BJ (cell line): ENCODE measurements at regions of chr4 and their contacts with region 1.

Region 1: GRCh38 chr4:40940317-40940741 is 190.6 kb downstream of the NSUN7 start:
- DNase-seq: no peak
- H3K4me3 ChIP-seq: no peak overlapping the region
- H3K27me3 ChIP-seq: no peaks in the 10 kb centered on the region
- CTCF ChIP-seq: no peak

Region 2: DNA sequence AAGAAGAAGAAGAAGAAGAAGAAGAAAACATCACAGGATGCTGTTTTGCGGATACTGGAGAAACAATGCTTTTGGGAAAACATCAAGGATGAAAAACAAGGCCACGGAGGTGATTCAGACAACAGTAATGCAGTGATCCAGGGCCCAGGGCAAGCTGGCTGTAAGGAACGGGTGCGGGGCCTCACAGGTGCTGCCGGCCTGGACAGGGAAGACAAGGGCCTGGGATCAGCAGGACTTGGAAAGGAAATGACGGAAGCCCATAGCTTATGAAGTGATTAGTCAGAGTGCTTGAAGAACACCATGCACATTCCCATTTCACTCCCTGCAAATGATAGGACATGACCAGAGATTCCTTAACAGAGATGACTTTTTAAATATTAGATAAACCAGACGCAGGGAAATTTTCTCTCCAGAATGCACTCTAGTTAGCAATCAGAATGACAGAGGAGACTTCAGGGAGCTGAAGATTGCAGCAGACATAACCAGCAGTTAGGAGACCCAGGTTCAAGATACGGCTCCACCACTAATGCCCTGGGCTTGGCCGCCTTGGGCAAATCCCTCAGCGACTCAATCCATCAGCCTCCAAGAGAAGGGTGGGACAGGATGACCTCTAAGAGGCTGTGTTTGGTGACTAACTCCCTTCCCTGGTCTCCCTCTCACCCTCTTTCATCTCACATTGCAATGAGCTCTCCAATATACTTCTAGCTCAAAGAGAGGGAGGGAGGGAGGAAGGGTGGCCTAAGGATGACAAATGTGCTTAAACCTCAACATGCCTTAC is 219.9 kb after region 1 on chr4:
- CTCF ChIA-PET with region 1: no interaction called
- POLR2A ChIA-PET with region 1: interaction called, 12 read pairs
- DNase-seq: peak; percentile 52
- H3K4me3 ChIP-seq: no peak overlapping the region
- H3K27me3 ChIP-seq: no peaks in the 10 kb centered on the region
- CTCF ChIP-seq: no peak